CD8-positive, alpha-beta T cell (primary cell): ENCODE measurements at regions of chr2 and their contacts with region 1.

Region 1: DNA sequence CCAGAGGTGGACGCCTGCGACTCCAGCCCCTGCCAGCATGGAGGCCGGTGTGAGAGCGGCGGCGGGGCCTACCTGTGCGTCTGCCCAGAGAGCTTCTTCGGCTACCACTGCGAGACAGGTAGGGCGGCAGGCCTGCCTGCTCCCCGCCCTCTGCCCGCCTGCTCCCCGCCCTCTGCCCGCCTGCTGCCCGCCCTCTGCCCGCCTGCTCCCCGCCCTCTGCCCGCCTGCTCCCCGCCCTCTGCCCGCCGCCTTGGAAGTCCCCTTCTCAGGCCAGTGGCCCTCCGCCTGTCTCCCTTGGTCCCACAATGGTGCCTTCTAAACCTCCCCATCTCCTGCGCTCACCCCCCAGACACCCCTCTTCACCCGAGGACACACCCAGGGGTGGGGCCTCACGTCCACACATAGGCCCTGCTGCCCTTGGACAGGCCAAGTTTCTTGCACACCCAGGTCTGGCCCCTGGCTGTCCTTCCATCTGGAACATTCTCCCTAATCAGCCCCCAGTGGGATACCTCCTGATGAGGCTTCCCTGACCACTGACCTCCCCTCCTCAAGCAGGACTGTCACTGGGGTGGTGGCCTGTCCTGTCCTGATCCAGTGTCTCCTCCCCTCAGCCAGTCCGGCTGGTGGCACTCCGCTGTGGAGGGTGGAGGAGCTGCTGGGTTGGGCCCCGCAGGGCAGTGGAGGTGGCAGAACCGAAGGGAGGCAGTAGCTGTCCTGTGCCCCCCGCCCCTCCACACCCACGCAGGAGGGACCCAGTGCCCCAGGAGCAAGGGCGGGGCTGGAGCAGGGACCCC is 37.9 kb downstream of the MTERF4 start:
- DNase-seq: peak; percentile 17 to 69 (median 44)
- ATAC-seq: peak; percentile 86
- H3K4me3 ChIP-seq: peak overlapping the region in 1 of 2 experiments; percentile 35
- H3K4me3 Mint-ChIP-seq: peak overlapping the region; percentile 71
- H3K27ac ChIP-seq: no peak overlapping the region
- H3K27ac Mint-ChIP-seq: peak overlapping the region; percentile 37
- H3K4me1 ChIP-seq: peaks cover 10% of the 10 kb centered on the region
- H3K4me1 Mint-ChIP-seq: peaks cover 6% of the 10 kb centered on the region
- H3K27me3 ChIP-seq: no peaks in the 10 kb centered on the region
- H3K27me3 Mint-ChIP-seq: no peaks in the 10 kb centered on the region
- CTCF ChIP-seq: no peak

Region 2: GRCh38 chr2:240032406-240033329 is 1031.5 kb before region 1 on chr2:
- CTCF ChIA-PET with region 1: no interaction called
- POLR2A ChIA-PET with region 1: no interaction called
- intact Hi-C with region 1: no loop called
- DNase-seq: no peak
- ATAC-seq: no peak
- H3K4me3 ChIP-seq: no peak overlapping the region
- H3K4me3 Mint-ChIP-seq: no peak overlapping the region
- H3K27ac ChIP-seq: no peak overlapping the region
- H3K27ac Mint-ChIP-seq: no peak overlapping the region
- H3K4me1 ChIP-seq: no peaks in the 10 kb centered on the region
- H3K4me1 Mint-ChIP-seq: no peaks in the 10 kb centered on the region
- H3K27me3 ChIP-seq: no peaks in the 10 kb centered on the region
- H3K27me3 Mint-ChIP-seq: peaks cover 25% of the 10 kb centered on the region
- CTCF ChIP-seq: no peak

Region 3: GRCh38 chr2:240868286-240869108 is 195.7 kb before region 1 on chr2 and contains the start of gene AGXT:
- CTCF ChIA-PET with region 1: no interaction called
- POLR2A ChIA-PET with region 1: no interaction called
- intact Hi-C with region 1: no loop called
- DNase-seq: no peak
- ATAC-seq: no peak
- H3K4me3 ChIP-seq: no peak within 1 kb of the TSS
- H3K4me3 Mint-ChIP-seq: no peak within 1 kb of the TSS
- H3K27ac ChIP-seq: no peak within 1 kb of the TSS
- H3K27ac Mint-ChIP-seq: no peak within 1 kb of the TSS
- H3K4me1 ChIP-seq: no peaks in the 10 kb centered on the region
- H3K4me1 Mint-ChIP-seq: no peaks in the 10 kb centered on the region
- H3K27me3 ChIP-seq: no peaks in the 10 kb centered on the region
- H3K27me3 Mint-ChIP-seq: peaks cover 9% of the 10 kb centered on the region
- CTCF ChIP-seq: no peak
- total RNA-seq, gene AGXT: not detected

Region 4: DNA sequence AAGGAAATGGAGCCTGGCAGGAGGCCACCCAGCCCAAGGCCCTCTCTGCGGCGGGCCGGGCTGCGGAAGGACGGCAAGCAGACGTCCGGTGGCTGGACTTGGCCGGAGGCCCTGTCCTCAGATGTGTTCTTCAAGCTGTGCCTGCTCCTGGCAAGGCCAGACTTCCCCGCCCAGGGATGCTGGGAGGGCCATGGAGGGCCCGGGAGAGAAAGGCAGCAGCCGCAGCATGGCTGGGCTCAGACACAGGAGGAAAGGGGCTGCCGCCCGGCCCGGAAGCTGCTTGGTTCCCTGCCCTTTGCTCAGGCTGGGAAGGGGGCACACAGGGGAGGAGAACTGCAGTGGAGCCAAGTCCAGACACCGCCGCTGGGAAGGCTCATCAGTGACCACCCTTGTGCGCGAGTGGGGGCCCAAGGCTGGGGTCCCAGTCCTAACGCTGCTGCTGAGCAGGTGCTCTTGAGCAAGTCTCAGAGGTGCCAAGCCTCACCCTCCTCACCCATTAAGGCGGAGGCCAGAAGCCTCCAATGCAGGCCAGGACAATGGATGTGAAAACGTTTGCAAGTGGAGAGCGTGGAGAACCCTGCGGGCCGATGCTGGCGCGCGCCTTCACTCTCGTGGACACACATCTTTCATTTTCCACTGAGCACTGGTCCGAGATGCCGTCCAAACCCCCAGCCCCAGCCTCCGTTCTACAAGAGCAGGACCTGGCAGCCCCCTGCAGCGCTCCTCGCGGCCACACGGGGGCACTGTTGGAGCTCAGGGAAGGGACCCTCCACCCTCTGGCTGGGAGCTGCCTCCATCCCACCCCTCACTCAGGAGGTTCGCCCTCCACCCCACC is 150.2 kb before region 1 on chr2:
- CTCF ChIA-PET with region 1: no interaction called
- POLR2A ChIA-PET with region 1: no interaction called
- intact Hi-C with region 1: loop called in 1 of 2 experiments (anchors 1 kb)
- DNase-seq: peak; percentile 31 to 83 (median 60)
- ATAC-seq: peak; percentile 67
- H3K4me3 ChIP-seq: no peak overlapping the region
- H3K4me3 Mint-ChIP-seq: no peak overlapping the region
- H3K27ac ChIP-seq: no peak overlapping the region
- H3K27ac Mint-ChIP-seq: no peak overlapping the region
- H3K4me1 ChIP-seq: no peaks in the 10 kb centered on the region
- H3K4me1 Mint-ChIP-seq: no peaks in the 10 kb centered on the region
- H3K27me3 ChIP-seq: peaks cover 6 to 8% of the 10 kb centered on the region in 2 experiments
- H3K27me3 Mint-ChIP-seq: peaks cover 11% of the 10 kb centered on the region
- CTCF ChIP-seq: peak; percentile 87

Region 5: DNA sequence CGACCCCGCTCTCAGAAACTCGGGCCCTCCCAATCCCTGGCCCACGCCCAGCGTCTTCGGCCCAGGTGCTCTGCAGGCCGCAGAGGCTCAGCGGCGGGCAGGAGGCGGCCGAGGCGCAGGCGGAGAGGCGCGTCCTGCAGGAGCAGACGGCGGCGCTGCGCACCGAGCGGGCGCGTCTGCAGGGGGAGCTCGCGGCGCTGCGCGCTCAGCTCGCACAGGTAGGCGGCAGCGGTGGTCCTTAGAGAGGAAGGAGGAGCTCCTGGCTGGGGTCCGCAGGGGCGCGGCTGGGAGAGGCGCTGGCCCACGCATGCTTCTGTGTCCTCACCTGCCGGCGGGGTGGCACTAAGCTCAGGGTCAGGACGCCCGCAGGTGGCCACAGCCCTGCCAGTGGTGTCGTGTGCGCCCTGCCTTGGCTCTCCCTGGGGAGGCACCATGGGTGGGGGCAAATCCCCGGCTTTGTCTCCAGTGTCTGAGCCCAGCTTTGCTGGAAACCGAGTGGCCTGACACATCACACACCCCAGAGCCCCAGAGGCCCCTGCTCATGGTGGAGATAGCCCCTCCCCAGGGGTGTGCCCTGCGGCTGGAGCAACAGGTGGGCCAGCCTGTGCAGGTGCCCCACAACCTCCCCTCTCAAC is 80.7 kb before region 1 on chr2:
- CTCF ChIA-PET with region 1: interaction called, 12 read pairs
- POLR2A ChIA-PET with region 1: no interaction called
- intact Hi-C with region 1: loop called in 1 of 2 experiments (anchors 2 kb)
- DNase-seq: peak; percentile 15 to 81 (median 49)
- ATAC-seq: peak; percentile 94
- H3K4me3 ChIP-seq: no peak overlapping the region
- H3K4me3 Mint-ChIP-seq: no peak overlapping the region
- H3K27ac ChIP-seq: no peak overlapping the region
- H3K27ac Mint-ChIP-seq: no peak overlapping the region
- H3K4me1 ChIP-seq: no peaks in the 10 kb centered on the region
- H3K4me1 Mint-ChIP-seq: peaks cover 3% of the 10 kb centered on the region
- H3K27me3 ChIP-seq: no peaks in the 10 kb centered on the region
- H3K27me3 Mint-ChIP-seq: no peaks in the 10 kb centered on the region
- CTCF ChIP-seq: peak; percentile 65

Region 6: DNA sequence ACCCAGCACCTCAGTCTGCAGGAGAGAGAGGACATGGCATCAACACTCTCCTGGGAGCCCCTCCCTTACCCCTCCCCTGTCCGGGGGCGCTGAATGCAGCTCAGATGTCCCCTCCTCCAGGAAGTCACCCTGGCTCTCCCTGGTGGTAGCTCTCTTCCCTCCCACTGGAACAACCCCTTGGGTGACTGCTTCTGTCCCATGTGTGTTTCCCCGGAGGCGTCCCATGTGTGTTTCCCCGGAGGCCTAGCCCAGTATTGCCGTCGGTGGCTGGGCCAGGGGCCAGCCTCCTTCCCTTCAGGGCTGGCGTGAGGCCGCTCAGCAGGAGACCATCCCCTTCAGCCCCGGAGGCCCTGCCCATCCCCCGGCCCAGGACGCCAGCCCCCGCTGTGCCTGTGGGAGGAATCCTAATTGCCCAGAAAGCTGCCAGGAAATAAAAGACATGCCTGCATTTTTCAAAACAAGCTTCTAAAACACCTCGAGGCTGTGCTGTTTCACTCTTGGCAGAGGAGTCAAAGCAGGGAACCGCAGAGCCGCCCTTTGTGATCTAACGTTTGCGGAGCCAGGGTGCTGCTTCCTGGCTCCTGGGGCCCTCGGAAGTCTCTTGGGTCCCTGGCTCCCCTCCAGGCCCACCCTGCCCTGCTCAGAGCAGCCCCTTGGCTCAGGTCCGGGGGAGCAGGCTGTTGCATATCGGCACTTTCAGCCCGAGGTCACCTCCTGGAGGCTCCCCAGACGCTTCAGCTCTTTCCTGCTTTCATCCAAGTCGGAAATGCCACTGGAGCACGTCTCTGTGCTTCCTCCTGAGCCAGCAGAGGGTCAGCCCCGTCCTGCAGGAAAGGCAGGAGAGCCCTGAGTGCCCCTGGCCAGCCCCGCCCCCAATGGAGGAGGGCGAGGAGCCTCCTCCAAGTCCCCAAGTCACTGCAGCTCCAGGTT is 54.3 kb before region 1 on chr2:
- CTCF ChIA-PET with region 1: interaction called, 3 read pairs
- POLR2A ChIA-PET with region 1: interaction called, 3 read pairs
- intact Hi-C with region 1: loop called in 1 of 2 experiments (anchors 10 kb)
- DNase-seq: peak in 8 of 9 experiments; percentile 36 to 83 (median 68)
- ATAC-seq: peak; percentile 80
- H3K4me3 ChIP-seq: peak overlapping the region; percentile 32 to 45
- H3K4me3 Mint-ChIP-seq: peak overlapping the region; percentile 67
- H3K27ac ChIP-seq: peak overlapping the region; percentile 56 to 71
- H3K27ac Mint-ChIP-seq: peak overlapping the region; percentile 91
- H3K4me1 ChIP-seq: peaks cover 67% of the 10 kb centered on the region
- H3K4me1 Mint-ChIP-seq: peaks cover 59% of the 10 kb centered on the region
- H3K27me3 ChIP-seq: no peaks in the 10 kb centered on the region
- H3K27me3 Mint-ChIP-seq: no peaks in the 10 kb centered on the region
- CTCF ChIP-seq: no peak

Region 7: DNA sequence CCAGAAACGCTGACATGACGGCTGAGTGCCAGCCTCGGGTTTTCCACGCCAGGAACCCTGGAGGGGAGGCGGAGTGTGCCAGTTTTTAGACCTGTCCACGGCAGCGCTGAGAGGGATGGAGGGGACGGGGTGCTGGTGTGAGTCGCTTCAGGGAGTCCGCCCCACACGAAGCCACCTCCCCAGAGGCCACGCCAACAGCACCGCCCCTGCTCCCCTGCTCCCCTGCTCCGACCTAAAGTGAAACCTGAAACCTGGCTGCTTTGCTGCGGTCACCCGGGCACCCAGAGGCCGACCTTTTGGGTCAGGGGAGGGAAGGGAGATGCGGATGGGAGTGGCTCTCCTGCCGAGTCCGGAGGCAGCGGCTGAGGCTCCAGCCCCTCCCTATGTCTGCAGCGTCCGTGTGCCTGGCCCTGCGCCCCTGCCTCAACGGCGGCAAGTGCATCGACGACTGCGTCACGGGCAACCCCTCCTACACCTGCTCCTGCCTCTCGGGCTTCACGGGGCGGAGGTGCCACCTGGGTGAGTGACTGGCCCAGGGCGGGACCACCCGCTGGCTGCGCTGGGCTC is 27.7 kb before region 1 on chr2:
- CTCF ChIA-PET with region 1: no interaction called
- POLR2A ChIA-PET with region 1: no interaction called
- intact Hi-C with region 1: no loop called
- DNase-seq: peak; percentile 45 to 84 (median 68)
- ATAC-seq: peak; percentile 68
- H3K4me3 ChIP-seq: peak overlapping the region; percentile 66 to 75
- H3K4me3 Mint-ChIP-seq: peak overlapping the region; percentile 80
- H3K27ac ChIP-seq: peak overlapping the region; percentile 80 to 88
- H3K27ac Mint-ChIP-seq: peak overlapping the region; percentile 88
- H3K4me1 ChIP-seq: peaks cover 25% of the 10 kb centered on the region
- H3K4me1 Mint-ChIP-seq: peaks cover 15% of the 10 kb centered on the region
- H3K27me3 ChIP-seq: no peaks in the 10 kb centered on the region
- H3K27me3 Mint-ChIP-seq: no peaks in the 10 kb centered on the region
- CTCF ChIP-seq: no peak

Region 8: GRCh38 chr2:241598480-241598879 is 534.3 kb after region 1 on chr2:
- CTCF ChIA-PET with region 1: no interaction called
- POLR2A ChIA-PET with region 1: no interaction called
- intact Hi-C with region 1: no loop called
- DNase-seq: no peak
- ATAC-seq: no peak
- H3K4me3 ChIP-seq: no peak overlapping the region
- H3K4me3 Mint-ChIP-seq: no peak overlapping the region
- H3K27ac ChIP-seq: no peak overlapping the region
- H3K27ac Mint-ChIP-seq: no peak overlapping the region
- H3K4me1 ChIP-seq: no peaks in the 10 kb centered on the region
- H3K4me1 Mint-ChIP-seq: no peaks in the 10 kb centered on the region
- H3K27me3 ChIP-seq: no peaks in the 10 kb centered on the region
- H3K27me3 Mint-ChIP-seq: no peaks in the 10 kb centered on the region
- CTCF ChIP-seq: no peak